Activated T-helper 2 cell treated with anti-CD3 and anti-CD28 coated beads, Interferon-gamma antibody, Interleukin-2, Interleukin-4, amounts not matched to agents 10 μg/mL and 5 μg/mL and 100 μg/mL, durations not matched to agents 14 hours and 24 hours and 36 hours (primary cell): ENCODE measurements at regions of chr18 and their contacts with region 1.

Region 1: GRCh38 chr18:44758861-44759631 is 78.4 kb downstream of the SETBP1 start:
- DNase-seq: peak; percentile 27
- H3K4me3 Mint-ChIP-seq: peak overlapping the region; percentile 53
- H3K27ac Mint-ChIP-seq: peak overlapping the region; percentile 97
- H3K4me1 Mint-ChIP-seq: peaks cover 36% of the 10 kb centered on the region
- H3K27me3 Mint-ChIP-seq: no peaks in the 10 kb centered on the region

Region 2: DNA sequence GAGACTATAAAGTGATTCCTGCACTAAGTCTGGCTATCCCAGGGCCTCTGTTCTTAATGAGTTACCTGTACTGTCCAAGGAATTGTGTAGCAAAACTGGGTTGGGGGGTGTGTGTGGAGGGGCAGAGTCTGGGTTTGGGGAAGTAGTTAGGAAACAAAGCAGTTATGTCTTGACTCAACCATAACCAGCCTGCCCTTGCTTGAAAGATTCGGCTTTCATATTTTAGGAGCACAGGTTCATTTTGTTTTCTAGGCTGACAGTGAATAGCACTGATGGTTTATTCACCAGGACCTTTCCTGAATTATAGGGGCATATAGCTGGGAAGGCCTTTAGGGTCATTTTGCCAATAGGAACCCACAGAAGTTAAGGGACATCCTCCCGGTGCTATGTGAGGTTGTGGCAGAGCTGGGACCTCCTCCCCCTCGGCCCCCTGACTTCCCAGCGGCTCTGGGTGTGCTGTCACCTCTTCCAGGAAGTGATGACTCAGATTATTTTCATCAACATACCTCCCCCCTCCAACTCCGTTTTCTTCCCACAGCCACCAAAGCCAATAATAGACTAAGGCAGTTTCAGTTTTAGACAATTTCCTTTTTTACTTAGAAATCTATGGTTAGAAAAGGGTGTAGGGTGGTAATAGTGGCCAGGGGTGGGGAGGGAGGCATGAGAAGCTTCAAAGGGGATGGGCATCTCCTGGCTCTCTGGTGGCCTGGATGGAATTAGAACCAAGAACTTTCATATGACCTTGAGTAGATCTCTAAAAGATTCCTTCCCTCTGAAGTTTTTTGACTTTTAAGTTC is 33.5 kb before region 1 on chr18:
- intact Hi-C with region 1: loop called (anchors 1 kb)
- DNase-seq: peak; percentile 66
- H3K4me3 Mint-ChIP-seq: peak overlapping the region; percentile 19
- H3K27ac Mint-ChIP-seq: peak overlapping the region; percentile 83
- H3K4me1 Mint-ChIP-seq: peaks cover 90% of the 10 kb centered on the region
- H3K27me3 Mint-ChIP-seq: no peaks in the 10 kb centered on the region

Region 3: GRCh38 chr18:44733069-44733753 is 25.8 kb before region 1 on chr18:
- intact Hi-C with region 1: loop called (anchors 1 kb)
- DNase-seq: no peak
- H3K4me3 Mint-ChIP-seq: peak overlapping the region; percentile 26
- H3K27ac Mint-ChIP-seq: peak overlapping the region; percentile 67
- H3K4me1 Mint-ChIP-seq: peaks cover 81% of the 10 kb centered on the region
- H3K27me3 Mint-ChIP-seq: no peaks in the 10 kb centered on the region

Region 4: GRCh38 chr18:44838971-44839666 is 80.1 kb after region 1 on chr18:
- intact Hi-C with region 1: loop called (anchors 1 kb)
- DNase-seq: peak; percentile 62
- H3K4me3 Mint-ChIP-seq: no peak overlapping the region
- H3K27ac Mint-ChIP-seq: peak overlapping the region; percentile 5
- H3K4me1 Mint-ChIP-seq: peaks cover 39% of the 10 kb centered on the region
- H3K27me3 Mint-ChIP-seq: no peaks in the 10 kb centered on the region

Region 5: DNA sequence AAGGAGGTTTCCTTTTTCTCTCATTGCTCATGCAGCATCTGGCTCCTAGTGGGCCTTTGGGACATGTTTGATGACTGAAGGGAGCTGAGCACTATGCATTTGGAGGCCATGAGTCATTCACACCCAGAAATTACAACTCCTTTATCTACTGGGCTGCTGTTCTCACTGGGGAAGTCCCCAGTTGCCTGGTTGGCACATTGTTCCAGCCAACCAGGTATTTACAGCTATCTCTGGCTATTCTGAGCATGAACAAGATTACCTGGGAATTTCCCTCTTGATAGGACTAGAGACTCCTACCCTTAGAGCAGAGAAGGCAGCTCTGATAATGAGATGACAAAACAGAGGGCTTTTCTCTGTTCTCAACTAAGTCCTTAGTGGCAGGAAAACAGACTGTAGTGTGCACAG is 128.2 kb after region 1 on chr18:
- intact Hi-C with region 1: loop called (anchors 1 kb)
- DNase-seq: peak; percentile 11
- H3K4me3 Mint-ChIP-seq: peak overlapping the region; percentile 57
- H3K27ac Mint-ChIP-seq: peak overlapping the region; percentile 99
- H3K4me1 Mint-ChIP-seq: peaks cover 35% of the 10 kb centered on the region
- H3K27me3 Mint-ChIP-seq: no peaks in the 10 kb centered on the region

Region 6: GRCh38 chr18:44895176-44895798 is 136.2 kb after region 1 on chr18:
- intact Hi-C with region 1: loop called (anchors 1 kb)
- DNase-seq: peak; percentile 10
- H3K4me3 Mint-ChIP-seq: no peak overlapping the region
- H3K27ac Mint-ChIP-seq: peak overlapping the region; percentile 20
- H3K4me1 Mint-ChIP-seq: peaks cover 49% of the 10 kb centered on the region
- H3K27me3 Mint-ChIP-seq: no peaks in the 10 kb centered on the region